ENCODE measurements at regions of chrX and their contacts with region 1.

Region 1: GRCh38 chrX:135973548-135974278 is at the start of gene MMGT1:
- DNase-seq: peak; percentile 51 to 82 (median 77)
- ATAC-seq: peak; percentile 91
- H3K4me3 ChIP-seq: peak within 1 kb of the TSS; percentile 91
- H3K4me3 Mint-ChIP-seq: peak within 1 kb of the TSS; percentile 90 to 99 (median 98)
- H3K27ac ChIP-seq: peak within 1 kb of the TSS; percentile 83
- H3K27ac Mint-ChIP-seq: peak within 1 kb of the TSS; percentile 92 to 99 (median 97)
- H3K4me1 ChIP-seq: peaks cover 13 to 17% of the 10 kb centered on the region in 2 donors
- H3K4me1 Mint-ChIP-seq: peaks cover 10 to 37% (median 28%) of the 10 kb centered on the region in 7 donors
- H3K27me3 ChIP-seq: no peaks in the 10 kb centered on the region
- H3K27me3 Mint-ChIP-seq: no peaks in the 10 kb centered on the region
- total RNA-seq, gene MMGT1: 22.0 to 28.4 (median 24.0) TPM

Region 2: GRCh38 chrX:135003876-135004623 is 969.7 kb before region 1 on chrX:
- CTCF ChIA-PET with region 1: no interaction called
- POLR2A ChIA-PET with region 1: no interaction called
- intact Hi-C with region 1: loop called in 1 of 2 experiments (anchors 1 kb)
- DNase-seq: peak; percentile 78 to 90 (median 87)
- ATAC-seq: peak; percentile 100
- H3K4me3 ChIP-seq: peak overlapping the region; percentile 59
- H3K4me3 Mint-ChIP-seq: peak overlapping the region; percentile 83 to 94 (median 88)
- H3K27ac ChIP-seq: peak overlapping the region; percentile 46
- H3K27ac Mint-ChIP-seq: peak overlapping the region; percentile 10 to 89 (median 76)
- H3K4me1 ChIP-seq: no peaks in the 10 kb centered on the region
- H3K4me1 Mint-ChIP-seq: peaks cover 0 to 19% (median 10%) of the 10 kb centered on the region in 7 donors
- H3K27me3 ChIP-seq: no peaks in the 10 kb centered on the region
- H3K27me3 Mint-ChIP-seq: peaks cover 0 to 15% (median 0%) of the 10 kb centered on the region in 5 donors

Region 3: GRCh38 chrX:135421537-135421931 is 552.2 kb before region 1 on chrX:
- CTCF ChIA-PET with region 1: no interaction called
- POLR2A ChIA-PET with region 1: no interaction called
- intact Hi-C with region 1: loop called in 1 of 2 experiments (anchors 5 kb)
- DNase-seq: peak; percentile 75 to 89 (median 83)
- ATAC-seq: peak; percentile 96
- H3K4me3 ChIP-seq: peak overlapping the region; percentile 37
- H3K4me3 Mint-ChIP-seq: peak overlapping the region; percentile 53 to 84 (median 72)
- H3K27ac ChIP-seq: no peak overlapping the region
- H3K27ac Mint-ChIP-seq: peak overlapping the region in 4 of 9 donors; percentile 12 to 68 (median 26)
- H3K4me1 ChIP-seq: no peaks in the 10 kb centered on the region
- H3K4me1 Mint-ChIP-seq: peaks cover 0 to 13% (median 6%) of the 10 kb centered on the region in 7 donors
- H3K27me3 ChIP-seq: no peaks in the 10 kb centered on the region
- H3K27me3 Mint-ChIP-seq: peaks cover 0 to 22% (median 0%) of the 10 kb centered on the region in 5 donors

Region 4: DNA sequence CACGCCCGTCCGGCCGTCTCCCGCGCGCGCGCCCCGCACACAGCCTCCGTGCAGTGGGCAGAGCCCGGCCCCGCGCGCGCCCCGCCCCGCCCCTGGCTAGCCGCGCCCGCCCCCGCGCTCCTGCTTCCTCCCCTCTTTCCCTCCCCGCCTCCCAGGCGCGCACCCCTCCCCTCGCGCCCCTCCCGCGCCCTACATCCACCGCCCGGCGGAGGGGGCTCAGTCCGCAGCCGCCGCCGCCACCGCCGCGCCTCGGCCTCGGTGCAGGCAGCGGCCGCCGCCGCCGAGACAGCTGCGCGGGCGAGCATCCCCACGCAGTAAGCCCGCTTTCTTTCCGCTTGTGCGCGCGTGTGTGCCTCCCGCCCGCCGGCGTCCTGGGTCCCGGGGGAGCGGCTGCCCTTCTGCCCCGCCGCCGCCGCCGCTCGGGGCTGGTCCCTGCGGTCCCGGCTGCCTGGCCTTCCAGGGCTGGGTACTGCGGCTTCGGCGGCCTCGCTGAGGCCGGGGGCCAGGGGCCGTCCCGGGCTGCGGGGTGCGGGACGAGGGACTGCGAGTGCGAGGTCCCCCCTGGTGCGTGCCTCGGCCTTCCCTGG is 173.7 kb after region 1 on chrX and contains the start of gene FHL1:
- CTCF ChIA-PET with region 1: no interaction called
- POLR2A ChIA-PET with region 1: no interaction called
- intact Hi-C with region 1: loop called in 1 of 2 experiments (anchors 5 kb)
- DNase-seq: peak; percentile 12 to 59 (median 45)
- ATAC-seq: peak; percentile 86
- H3K4me3 ChIP-seq: peak within 1 kb of the TSS; percentile 55
- H3K4me3 Mint-ChIP-seq: peak within 1 kb of the TSS; percentile 82 to 94 (median 89)
- H3K27ac ChIP-seq: peak within 1 kb of the TSS; percentile 56
- H3K27ac Mint-ChIP-seq: peak within 1 kb of the TSS; percentile 73 to 97 (median 91)
- H3K4me1 ChIP-seq: peaks cover 0 to 17% of the 10 kb centered on the region in 2 donors
- H3K4me1 Mint-ChIP-seq: peaks cover 23 to 54% (median 41%) of the 10 kb centered on the region in 7 donors
- H3K27me3 ChIP-seq: no peaks in the 10 kb centered on the region
- H3K27me3 Mint-ChIP-seq: peaks cover 0 to 14% (median 0%) of the 10 kb centered on the region in 5 donors
- total RNA-seq, gene FHL1: 14.9 to 26.4 (median 22.4) TPM

Region 5: GRCh38 chrX:136376713-136377112 is 403.0 kb after region 1 on chrX:
- CTCF ChIA-PET with region 1: no interaction called
- POLR2A ChIA-PET with region 1: no interaction called
- intact Hi-C with region 1: no loop called
- DNase-seq: no peak
- ATAC-seq: no peak
- H3K4me3 ChIP-seq: no peak overlapping the region
- H3K4me3 Mint-ChIP-seq: no peak overlapping the region
- H3K27ac ChIP-seq: no peak overlapping the region
- H3K27ac Mint-ChIP-seq: no peak overlapping the region
- H3K4me1 ChIP-seq: no peaks in the 10 kb centered on the region
- H3K4me1 Mint-ChIP-seq: peaks cover 0 to 2% (median 0%) of the 10 kb centered on the region in 7 donors
- H3K27me3 ChIP-seq: no peaks in the 10 kb centered on the region
- H3K27me3 Mint-ChIP-seq: peaks cover 0 to 13% (median 6%) of the 10 kb centered on the region in 5 donors

Region 6: DNA sequence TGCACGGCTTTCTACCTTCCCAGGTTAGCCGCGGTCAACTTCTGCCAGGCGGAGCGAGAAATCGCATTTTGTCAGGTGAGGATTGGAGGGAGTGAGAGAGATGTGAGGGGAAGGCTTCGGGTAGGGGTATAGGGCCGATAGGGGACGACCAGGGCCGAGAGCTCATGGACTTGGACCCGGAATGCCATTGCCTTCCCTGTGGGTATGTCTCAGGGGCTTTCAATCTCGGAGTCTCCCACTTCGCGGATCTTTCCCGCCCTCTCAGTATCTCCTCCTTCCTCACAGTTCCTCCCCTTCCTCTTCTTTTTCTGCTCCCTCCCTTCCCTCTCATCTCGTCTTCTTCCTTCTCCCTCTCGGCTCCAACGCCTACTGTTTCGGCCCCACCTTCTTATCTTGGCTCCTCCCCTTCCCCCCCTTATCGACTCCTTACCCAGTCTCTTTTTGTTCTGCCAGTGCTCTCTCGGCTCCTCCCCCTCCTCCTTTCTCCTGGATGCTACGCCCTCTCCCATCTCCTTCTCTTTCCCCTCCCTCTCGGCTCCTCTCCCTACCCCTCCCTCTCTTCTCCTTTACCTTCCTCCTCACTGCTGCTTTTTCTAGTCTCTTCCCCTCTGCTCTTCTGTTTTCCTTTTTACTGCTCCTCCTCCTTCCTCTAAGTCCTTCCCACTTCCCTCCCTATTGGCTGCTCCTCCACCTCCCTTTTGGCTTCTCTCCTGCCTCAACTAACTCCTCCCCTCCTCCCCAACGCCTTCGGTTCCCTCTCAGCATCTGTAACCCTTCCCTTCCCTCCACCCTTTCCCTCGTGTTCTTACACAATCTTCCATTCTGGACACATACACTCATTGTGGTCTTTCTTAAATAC is 936.2 kb after region 1 on chrX:
- CTCF ChIA-PET with region 1: no interaction called
- POLR2A ChIA-PET with region 1: no interaction called
- intact Hi-C with region 1: loop called in 1 of 2 experiments (anchors 1 kb)
- DNase-seq: peak; percentile 10 to 59 (median 39)
- ATAC-seq: peak; percentile 75
- H3K4me3 ChIP-seq: peak overlapping the region; percentile 84
- H3K4me3 Mint-ChIP-seq: peak overlapping the region; percentile 87 to 97 (median 96)
- H3K27ac ChIP-seq: peak overlapping the region; percentile 89
- H3K27ac Mint-ChIP-seq: peak overlapping the region; percentile 75 to 97 (median 91)
- H3K4me1 ChIP-seq: peaks cover 0 to 7% of the 10 kb centered on the region in 2 donors
- H3K4me1 Mint-ChIP-seq: peaks cover 0 to 22% (median 11%) of the 10 kb centered on the region in 7 donors
- H3K27me3 ChIP-seq: no peaks in the 10 kb centered on the region
- H3K27me3 Mint-ChIP-seq: no peaks in the 10 kb centered on the region

Measured in naive thymus-derived CD4-positive, alpha-beta T cell (primary cell).